Endothelial cell of umbilical vein (primary cell): ENCODE measurements at regions of chr3 and their contacts with region 1.

Region 1: DNA sequence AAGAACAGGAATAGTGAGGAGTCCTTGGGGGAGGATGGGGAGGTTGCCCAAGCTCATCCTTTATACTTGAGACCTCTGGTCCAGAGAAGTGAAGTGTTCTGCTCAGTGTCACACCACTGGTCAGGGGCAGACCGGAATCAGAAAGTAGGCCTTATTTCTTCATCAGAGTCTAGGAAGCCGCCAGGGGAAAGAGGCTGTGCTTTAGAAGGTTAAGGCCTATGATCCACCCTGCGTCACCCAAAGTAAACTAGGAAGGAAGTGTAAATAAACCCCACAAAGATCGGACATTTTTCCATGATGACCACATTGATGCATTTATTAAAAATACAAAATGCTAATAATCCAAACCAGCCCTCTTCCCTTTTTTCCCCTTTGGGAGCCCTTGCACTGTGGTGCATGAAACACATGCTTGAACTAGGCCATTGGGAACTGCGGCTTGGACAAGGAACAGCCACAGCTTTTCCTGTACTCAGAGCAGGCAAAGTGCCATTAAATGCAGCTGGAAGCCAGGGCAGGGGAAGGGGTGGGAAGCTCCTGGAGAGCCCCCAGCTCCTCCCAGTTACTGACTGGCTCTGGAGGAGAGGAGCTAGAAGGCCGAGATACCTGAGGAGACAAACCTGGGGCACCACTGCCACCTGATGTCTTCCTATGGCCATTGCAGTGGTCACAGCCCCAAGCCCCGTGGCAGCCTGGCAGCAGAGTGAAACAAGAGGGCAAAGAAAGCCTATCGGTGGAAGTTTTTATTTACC is 37.0 kb downstream of the CDC25A start:
- DNase-seq: peak; percentile 88
- H3K4me3 ChIP-seq: no peak overlapping the region
- H3K27ac ChIP-seq: peak overlapping the region; percentile 18
- H3K4me1 ChIP-seq: peaks cover 10% of the 10 kb centered on the region
- H3K27me3 ChIP-seq: no peaks in the 10 kb centered on the region
- CTCF ChIP-seq: peak; percentile 83 to 87
- POLR2A ChIP-seq: no peak

Region 2: DNA sequence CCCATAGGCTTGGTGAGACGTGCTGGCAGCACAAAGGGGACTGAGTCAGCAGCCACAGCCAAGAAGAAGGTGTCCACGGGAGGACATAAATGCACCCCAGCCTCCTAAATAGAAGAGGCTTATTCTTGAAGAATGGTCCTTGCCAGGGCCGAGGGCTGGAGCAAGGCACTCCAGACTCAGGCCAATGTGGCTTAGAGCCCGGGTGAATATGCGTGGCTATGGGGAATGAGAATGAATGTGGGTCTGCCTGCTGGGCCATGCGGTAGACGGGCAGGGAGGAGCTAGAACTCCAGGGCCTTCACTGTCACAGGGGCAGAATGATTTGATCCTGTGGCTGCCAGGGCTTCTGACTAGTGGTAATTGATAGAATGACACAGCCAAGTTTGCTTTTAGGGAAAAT is 314.2 kb before region 1 on chr3:
- CTCF ChIA-PET with region 1: interaction called, 129 read pairs
- POLR2A ChIA-PET with region 1: no interaction called
- dilution Hi-C with region 1: no loop called
- intact Hi-C with region 1: loop called (anchors 1 kb)
- DNase-seq: no peak
- H3K4me3 ChIP-seq: no peak overlapping the region
- H3K27ac ChIP-seq: no peak overlapping the region
- H3K4me1 ChIP-seq: no peaks in the 10 kb centered on the region
- H3K27me3 ChIP-seq: no peaks in the 10 kb centered on the region
- CTCF ChIP-seq: no peak
- POLR2A ChIP-seq: no peak

Region 3: DNA sequence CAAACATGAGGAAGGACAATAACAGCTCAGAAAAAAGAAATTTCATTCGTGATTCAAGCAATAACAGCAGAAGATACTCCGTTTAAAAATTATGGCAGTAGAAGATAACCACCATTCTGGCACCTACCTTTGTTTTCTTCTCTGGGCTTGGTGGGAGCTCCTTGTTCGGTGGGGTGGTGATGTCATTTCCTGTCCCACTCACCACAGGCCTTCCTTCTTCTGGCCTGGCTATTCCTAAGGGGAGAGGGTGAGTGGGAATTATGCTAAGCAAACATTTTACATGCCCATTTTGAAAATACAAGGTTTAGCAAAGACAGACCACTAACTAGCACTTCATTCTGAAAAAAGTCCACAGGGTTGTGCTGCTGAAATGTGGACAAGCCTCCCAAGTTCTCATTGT is 273.9 kb before region 1 on chr3:
- CTCF ChIA-PET with region 1: interaction called, 12 read pairs
- POLR2A ChIA-PET with region 1: no interaction called
- dilution Hi-C with region 1: no loop called
- intact Hi-C with region 1: loop called (anchors 1 kb)
- DNase-seq: peak; percentile 46
- H3K4me3 ChIP-seq: no peak overlapping the region
- H3K27ac ChIP-seq: peak overlapping the region; percentile 72
- H3K4me1 ChIP-seq: peaks cover 20% of the 10 kb centered on the region
- H3K27me3 ChIP-seq: no peaks in the 10 kb centered on the region
- CTCF ChIP-seq: no peak
- POLR2A ChIP-seq: no peak

Region 4: GRCh38 chr3:47996440-47996839 is 154.8 kb before region 1 on chr3:
- CTCF ChIA-PET with region 1: interaction called, 17 read pairs
- POLR2A ChIA-PET with region 1: no interaction called
- dilution Hi-C with region 1: no loop called
- intact Hi-C with region 1: no loop called
- DNase-seq: no peak
- H3K4me3 ChIP-seq: no peak overlapping the region
- H3K27ac ChIP-seq: no peak overlapping the region
- H3K4me1 ChIP-seq: no peaks in the 10 kb centered on the region
- H3K27me3 ChIP-seq: no peaks in the 10 kb centered on the region
- CTCF ChIP-seq: no peak
- POLR2A ChIP-seq: no peak

Region 5: DNA sequence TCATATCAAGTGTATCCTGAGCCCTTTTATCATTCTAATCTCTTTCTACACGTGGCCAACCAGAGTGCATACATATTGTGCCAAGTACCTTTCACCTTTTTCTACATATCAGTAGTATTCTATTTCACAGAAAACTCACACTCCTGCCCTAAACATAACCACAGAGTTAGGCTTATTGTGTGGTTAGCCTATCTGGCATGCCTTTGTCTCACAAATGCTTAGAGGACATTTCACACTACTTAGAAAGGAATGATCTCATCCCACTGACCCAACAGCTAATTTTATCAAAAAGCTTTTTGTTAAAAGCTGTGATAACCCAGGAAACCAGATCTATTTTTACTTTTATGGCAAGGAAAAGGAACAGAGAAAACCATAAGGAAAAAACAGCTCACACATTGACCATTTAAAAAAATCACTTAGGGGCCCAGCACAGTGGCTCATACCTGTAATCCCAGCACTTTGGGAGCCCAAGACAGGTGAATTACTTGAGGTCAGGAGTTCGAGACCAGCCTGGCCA is 117.2 kb before region 1 on chr3:
- CTCF ChIA-PET with region 1: interaction called, 7 read pairs
- POLR2A ChIA-PET with region 1: no interaction called
- dilution Hi-C with region 1: no loop called
- intact Hi-C with region 1: loop called (anchors 5 kb)
- DNase-seq: peak; percentile 66
- H3K4me3 ChIP-seq: no peak overlapping the region
- H3K27ac ChIP-seq: peak overlapping the region; percentile 65
- H3K4me1 ChIP-seq: peaks cover 15% of the 10 kb centered on the region
- H3K27me3 ChIP-seq: no peaks in the 10 kb centered on the region
- CTCF ChIP-seq: no peak
- POLR2A ChIP-seq: no peak

Region 6: DNA sequence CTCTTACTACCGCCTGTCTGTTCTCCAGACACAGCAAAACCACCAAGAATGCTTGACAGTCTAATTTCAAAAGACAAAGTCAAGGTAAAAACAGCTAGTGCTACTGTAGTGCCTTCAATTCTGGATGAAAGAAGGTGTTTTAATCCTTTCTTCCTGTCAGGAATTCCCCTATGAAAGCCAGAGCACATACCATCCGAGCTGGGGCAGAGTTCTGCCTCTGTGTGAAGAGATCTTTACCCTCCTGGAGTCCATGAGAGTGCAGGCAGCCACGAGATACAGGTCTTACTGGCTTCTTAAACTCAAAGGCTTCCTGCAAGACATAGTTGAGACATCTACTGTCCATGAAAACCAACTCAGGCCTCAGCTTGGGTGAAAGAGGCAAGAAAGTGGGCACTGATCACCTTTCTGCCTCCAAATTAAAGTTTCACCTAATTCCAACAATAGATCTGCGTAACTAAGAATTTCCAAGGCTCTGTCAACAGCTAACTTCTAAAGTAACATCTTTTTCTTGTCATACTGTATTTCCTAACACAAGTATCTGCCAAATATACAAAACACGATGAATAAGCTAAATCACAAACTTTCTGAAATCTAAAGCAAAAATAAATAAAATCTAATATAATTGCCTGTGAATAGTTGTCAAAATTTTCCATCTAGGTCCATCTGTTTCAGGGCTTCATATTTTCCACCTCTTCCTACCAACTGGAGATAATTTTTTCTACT is 29.5 kb after region 1 on chr3:
- CTCF ChIA-PET with region 1: no interaction called
- POLR2A ChIA-PET with region 1: no interaction called
- dilution Hi-C with region 1: no loop called
- intact Hi-C with region 1: no loop called
- DNase-seq: no peak
- H3K4me3 ChIP-seq: no peak overlapping the region
- H3K27ac ChIP-seq: no peak overlapping the region
- H3K4me1 ChIP-seq: no peaks in the 10 kb centered on the region
- H3K27me3 ChIP-seq: no peaks in the 10 kb centered on the region
- CTCF ChIP-seq: no peak
- POLR2A ChIP-seq: no peak